Activated CD4-positive, alpha-beta T cell treated with anti-CD3 and anti-CD28 coated beads for 36 hours (primary cell): ENCODE measurements at regions of chr12 and their contacts with region 1.

Region 1: GRCh38 chr12:47742253-47742825 is 16.3 kb downstream of the RAPGEF3 start:
- DNase-seq: peak; percentile 88
- ATAC-seq: peak; percentile 59
- H3K4me3 Mint-ChIP-seq: no peak overlapping the region
- H3K27ac Mint-ChIP-seq: no peak overlapping the region
- H3K4me1 Mint-ChIP-seq: peaks cover 17% of the 10 kb centered on the region
- H3K27me3 Mint-ChIP-seq: peaks cover 2% of the 10 kb centered on the region

Region 2: GRCh38 chr12:47504775-47505446 is 237.4 kb before region 1 on chr12:
- CTCF ChIA-PET with region 1: no interaction called
- POLR2A ChIA-PET with region 1: no interaction called
- intact Hi-C with region 1: no loop called
- DNase-seq: peak; percentile 13
- ATAC-seq: peak; percentile 86
- H3K4me3 Mint-ChIP-seq: no peak overlapping the region
- H3K27ac Mint-ChIP-seq: no peak overlapping the region
- H3K4me1 Mint-ChIP-seq: peaks cover 18% of the 10 kb centered on the region
- H3K27me3 Mint-ChIP-seq: peaks cover 2% of the 10 kb centered on the region

Region 3: DNA sequence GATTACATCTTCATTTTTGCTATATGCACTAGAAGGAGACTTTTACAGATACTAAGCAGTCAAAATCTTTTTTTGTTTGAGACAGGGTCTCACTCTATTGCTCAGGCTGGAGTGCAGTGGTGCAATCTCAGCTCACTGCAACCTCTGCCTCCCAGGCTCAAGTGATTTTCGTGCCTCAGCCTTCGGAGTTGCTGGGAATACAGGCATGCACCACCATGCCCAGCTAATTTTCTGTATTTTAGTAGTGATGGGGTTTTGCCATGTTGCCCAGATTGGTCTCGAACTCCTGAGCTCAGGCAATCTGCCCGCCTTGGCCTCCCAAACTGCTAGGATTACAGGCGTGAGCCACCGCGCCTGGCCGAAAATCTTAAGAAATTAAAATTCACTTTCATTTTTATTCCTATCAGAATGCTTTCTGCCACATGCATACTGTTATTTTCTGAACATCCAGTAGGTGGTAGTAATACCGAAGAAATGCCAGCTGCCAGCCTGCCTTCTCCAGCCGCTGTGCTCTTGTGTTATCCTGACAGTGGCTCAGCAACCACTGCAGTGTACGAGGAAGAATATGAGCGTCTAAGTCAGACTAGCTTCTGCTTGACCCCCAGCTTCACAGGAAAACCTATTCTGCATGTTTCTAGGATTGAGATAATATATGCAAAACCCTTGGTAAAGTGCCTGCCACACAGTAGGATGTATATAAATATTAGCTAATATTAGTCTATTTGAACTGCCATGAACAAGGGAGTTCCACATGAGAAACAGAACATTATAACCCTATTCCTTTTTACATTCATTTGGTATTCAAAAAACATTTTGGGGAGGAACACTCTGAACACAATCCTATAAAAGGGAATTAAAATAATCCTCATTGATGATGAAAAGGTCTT is 90.7 kb before region 1 on chr12:
- CTCF ChIA-PET with region 1: interaction called, 13 read pairs
- POLR2A ChIA-PET with region 1: no interaction called
- intact Hi-C with region 1: no loop called
- DNase-seq: peak; percentile 70
- ATAC-seq: peak; percentile 93
- H3K4me3 Mint-ChIP-seq: no peak overlapping the region
- H3K27ac Mint-ChIP-seq: peak overlapping the region; percentile 11
- H3K4me1 Mint-ChIP-seq: peaks cover 20% of the 10 kb centered on the region
- H3K27me3 Mint-ChIP-seq: no peaks in the 10 kb centered on the region

Region 4: DNA sequence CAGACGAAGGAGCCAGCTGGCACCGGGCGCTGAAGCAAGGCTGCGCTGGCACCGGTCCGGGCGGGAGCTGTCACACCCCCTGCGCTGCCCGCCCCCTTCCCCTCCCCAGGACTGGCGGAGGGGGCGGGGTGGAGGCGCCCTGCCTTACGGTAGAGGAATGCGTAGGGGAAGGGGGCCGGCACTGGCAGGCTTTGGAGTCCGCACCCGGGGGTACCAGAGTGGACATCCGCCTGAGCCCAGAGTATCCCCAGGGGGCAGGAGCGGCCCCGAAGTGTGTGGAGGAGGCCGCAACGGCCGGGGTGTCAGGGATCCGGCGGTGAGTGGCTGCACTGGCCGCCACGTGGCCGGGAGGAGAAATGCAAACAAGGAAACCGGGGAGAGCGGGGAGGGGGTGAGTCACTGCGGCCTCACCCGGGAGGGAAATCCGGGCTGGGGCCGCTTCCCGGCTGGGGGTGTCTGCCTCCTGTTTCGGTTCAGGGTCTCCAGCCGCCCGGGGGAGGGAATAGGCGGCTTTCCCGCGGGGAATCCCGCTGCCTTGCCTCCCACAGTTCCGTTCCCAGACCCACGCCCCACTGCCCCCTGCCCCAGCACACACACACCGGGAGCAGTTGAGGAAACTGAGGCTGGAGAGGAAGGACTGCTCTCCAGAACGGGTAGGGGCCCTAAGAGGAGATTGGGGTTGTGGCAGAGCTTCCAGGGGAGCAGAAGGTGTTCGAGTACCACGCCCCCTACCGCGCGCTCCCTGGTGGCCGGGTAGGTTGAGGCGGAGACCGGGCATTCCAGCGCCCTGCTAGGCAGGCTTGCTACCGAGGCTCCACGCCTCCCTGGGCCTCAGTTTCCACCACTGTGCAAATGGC is 16.7 kb after region 1 on chr12 and contains the start of gene RAPGEF3:
- CTCF ChIA-PET with region 1: interaction called, 218 read pairs
- POLR2A ChIA-PET with region 1: interaction called, 5 read pairs
- intact Hi-C with region 1: loop called (anchors 1 to 2 kb)
- DNase-seq: peak; percentile 84
- ATAC-seq: peak; percentile 74
- H3K4me3 Mint-ChIP-seq: peak within 1 kb of the TSS; percentile 63
- H3K27ac Mint-ChIP-seq: no peak within 1 kb of the TSS
- H3K4me1 Mint-ChIP-seq: peaks cover 47% of the 10 kb centered on the region
- H3K27me3 Mint-ChIP-seq: no peaks in the 10 kb centered on the region
- total RNA-seq, gene RAPGEF3: 0.43 to 0.83 TPM

Region 5: DNA sequence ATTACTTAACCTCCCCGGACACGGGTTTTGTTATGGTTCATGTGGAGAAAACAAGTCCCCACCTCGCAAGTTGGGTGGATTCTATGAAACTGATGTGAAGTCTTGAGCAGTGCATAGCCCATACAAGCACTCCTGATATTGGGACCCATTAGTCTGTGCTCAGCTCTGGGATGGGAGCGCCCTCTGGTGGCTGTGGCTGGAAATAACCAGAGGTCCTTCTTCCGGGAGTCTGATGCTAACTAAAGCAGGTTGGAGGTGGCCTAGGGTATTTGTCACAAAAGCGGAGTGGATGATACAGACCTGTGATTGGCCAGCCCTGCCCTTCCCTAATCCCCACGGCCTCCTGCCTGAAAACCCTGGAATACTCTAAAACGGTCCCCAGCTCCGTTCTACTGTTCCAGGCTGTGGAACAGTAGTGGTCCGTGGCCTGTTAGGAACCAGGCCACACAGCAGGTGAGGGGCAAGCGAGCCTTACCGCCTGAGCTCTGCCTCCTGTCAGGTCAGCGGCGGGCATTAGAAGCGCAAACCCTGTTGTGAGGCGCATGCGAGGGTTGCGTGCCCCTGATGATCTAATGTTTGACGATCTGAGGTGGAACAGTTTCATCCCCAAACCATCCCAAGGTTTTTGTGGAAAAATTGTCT is 37.1 kb after region 1 on chr12:
- CTCF ChIA-PET with region 1: interaction called, 449 read pairs
- POLR2A ChIA-PET with region 1: no interaction called
- intact Hi-C with region 1: loop called (anchors 1 kb)
- DNase-seq: peak; percentile 96
- ATAC-seq: peak; percentile 82
- H3K4me3 Mint-ChIP-seq: no peak overlapping the region
- H3K27ac Mint-ChIP-seq: peak overlapping the region; percentile 37
- H3K4me1 Mint-ChIP-seq: peaks cover 29% of the 10 kb centered on the region
- H3K27me3 Mint-ChIP-seq: no peaks in the 10 kb centered on the region

Region 6: GRCh38 chr12:47949441-47950308 is 207.3 kb after region 1 on chr12:
- CTCF ChIA-PET with region 1: interaction called, 6 read pairs
- POLR2A ChIA-PET with region 1: no interaction called
- intact Hi-C with region 1: loop called in 1 of 2 experiments (anchors 1 kb)
- DNase-seq: peak; percentile 78
- ATAC-seq: peak; percentile 83
- H3K4me3 Mint-ChIP-seq: no peak overlapping the region
- H3K27ac Mint-ChIP-seq: peak overlapping the region; percentile 10
- H3K4me1 Mint-ChIP-seq: peaks cover 10% of the 10 kb centered on the region
- H3K27me3 Mint-ChIP-seq: peaks cover 3% of the 10 kb centered on the region